Caki2 (cell line): ENCODE measurements at regions of chr6 and their contacts with region 1.

Region 1: GRCh38 chr6:110537208-110538123 is 61.1 kb upstream of the SLC22A16 start:
- DNase-seq: peak; percentile 80

Region 2: GRCh38 chr6:110784610-110784979 is 247.1 kb after region 1 on chr6:
- in situ Hi-C with region 1: no loop called
- DNase-seq: no peak

Region 3: GRCh38 chr6:110873981-110874879 is 336.8 kb after region 1 on chr6 and contains the start of gene AMD1:
- in situ Hi-C with region 1: loop called (anchors 10 kb)
- DNase-seq: peak; percentile 91
- total RNA-seq, gene AMD1: 33.7 and 38.2 TPM in 2 replicates